ENCODE measurements at regions of chr5 and their contacts with region 1.

Region 1: DNA sequence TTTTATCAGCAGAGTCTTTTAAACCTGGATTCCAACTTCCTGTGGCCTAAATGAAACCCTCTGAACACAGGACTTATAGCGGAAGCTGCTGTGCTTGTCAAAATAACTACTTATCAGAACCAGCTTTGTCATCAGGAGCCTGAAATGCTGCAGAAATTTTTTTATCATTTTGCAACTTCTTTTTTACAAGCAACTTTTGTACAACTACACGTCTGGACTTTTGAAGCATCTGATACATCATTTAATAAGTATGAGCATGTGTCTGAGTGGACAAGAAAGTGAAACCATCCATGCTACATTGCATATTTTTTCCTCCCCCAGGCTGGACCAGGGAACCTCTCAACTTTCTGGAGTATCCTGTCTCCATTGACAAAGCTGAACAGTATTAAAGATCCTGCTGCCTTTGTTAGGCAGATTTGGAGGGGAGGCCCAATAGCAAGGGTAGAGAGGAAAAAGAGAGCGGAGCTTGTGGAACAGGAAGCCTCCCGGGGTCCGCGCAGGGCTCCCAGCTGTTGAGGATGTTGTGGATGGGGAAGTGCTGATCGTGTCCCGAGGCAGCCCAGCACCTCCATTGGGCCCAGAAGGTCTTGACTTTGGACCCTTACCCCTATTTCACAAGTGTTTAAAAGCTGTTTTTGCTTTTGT is 196.6 kb downstream of the MSX2 start:
- DNase-seq: no peak
- H3K4me3 ChIP-seq: no peak overlapping the region
- H3K27ac ChIP-seq: no peak overlapping the region
- H3K4me1 ChIP-seq: no peaks in the 10 kb centered on the region
- H3K27me3 ChIP-seq: no peaks in the 10 kb centered on the region
- CTCF ChIP-seq: no peak
- EP300 ChIP-seq: no peak
- RAD21 ChIP-seq: no peak

Region 2: GRCh38 chr5:174608631-174609097 is 312.4 kb before region 1 on chr5:
- CTCF ChIA-PET with region 1: no interaction called
- POLR2A ChIA-PET with region 1: no interaction called
- DNase-seq: peak; percentile 42
- H3K4me3 ChIP-seq: no peak overlapping the region
- H3K27ac ChIP-seq: no peak overlapping the region; a peak in 1 of 4 replicates
- H3K4me1 ChIP-seq: peaks cover 0 to 9% of the 10 kb centered on the region in 2 experiments; a peak in 1 of 4 replicates
- H3K27me3 ChIP-seq: no peaks in the 10 kb centered on the region
- CTCF ChIP-seq: no peak
- EP300 ChIP-seq: no peak
- RAD21 ChIP-seq: no peak

Region 3: DNA sequence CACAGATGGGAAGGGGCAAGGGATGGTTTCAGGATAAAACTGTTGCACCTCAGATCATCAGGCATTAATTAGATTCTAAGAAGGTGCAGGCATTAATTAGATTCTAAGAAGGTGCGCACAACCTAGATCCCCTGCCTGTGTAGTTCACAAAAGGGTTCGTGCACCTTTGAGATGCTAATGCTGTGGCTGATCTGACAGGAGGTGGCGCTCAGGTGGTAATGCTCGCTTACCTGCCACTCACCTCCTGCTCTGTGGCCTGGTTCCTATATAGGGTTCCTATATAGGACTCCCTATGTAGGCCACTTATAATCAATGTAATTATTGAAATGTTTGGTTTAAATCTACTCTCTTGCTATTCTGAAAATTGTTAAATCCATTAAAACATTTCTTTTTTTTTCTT is 25.7 kb before region 1 on chr5:
- CTCF ChIA-PET with region 1: no interaction called
- POLR2A ChIA-PET with region 1: no interaction called
- DNase-seq: no peak
- H3K4me3 ChIP-seq: no peak overlapping the region; a peak in 1 of 4 replicates
- H3K27ac ChIP-seq: no peak overlapping the region
- H3K4me1 ChIP-seq: no peaks in the 10 kb centered on the region; a peak in 1 of 4 replicates
- H3K27me3 ChIP-seq: no peaks in the 10 kb centered on the region
- CTCF ChIP-seq: no peak
- EP300 ChIP-seq: no peak
- RAD21 ChIP-seq: no peak

Region 4: DNA sequence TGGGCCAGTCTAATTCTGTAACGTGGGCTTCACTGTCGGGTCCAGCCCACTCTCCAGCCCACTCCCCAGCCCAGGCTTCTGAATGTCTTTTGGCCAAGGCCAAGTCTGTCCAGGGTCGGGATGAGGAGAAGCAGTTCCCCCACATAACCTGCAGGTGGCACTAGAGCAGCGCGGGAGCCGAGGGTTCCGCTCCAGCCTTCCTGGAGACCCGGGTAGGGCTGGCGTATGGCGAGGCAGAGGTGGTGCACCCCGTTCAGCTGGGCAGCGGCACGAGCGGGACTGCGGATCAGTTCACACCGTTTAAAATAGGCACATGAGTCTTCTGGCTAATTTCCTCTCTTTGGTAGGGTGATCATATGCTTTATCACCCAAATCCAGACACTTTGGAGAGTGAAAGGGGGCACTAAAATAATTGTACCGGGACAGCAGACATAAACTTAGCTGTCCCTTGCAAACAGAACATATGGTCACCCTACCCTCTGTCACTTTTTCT is 10.7 kb before region 1 on chr5:
- CTCF ChIA-PET with region 1: interaction called, 24 read pairs
- POLR2A ChIA-PET with region 1: no interaction called
- DNase-seq: peak; percentile 90
- H3K4me3 ChIP-seq: peak overlapping the region in 1 of 2 experiments; percentile 43; a peak in 1 of 4 replicates
- H3K27ac ChIP-seq: no peak overlapping the region
- H3K4me1 ChIP-seq: no peaks in the 10 kb centered on the region
- H3K27me3 ChIP-seq: no peaks in the 10 kb centered on the region
- CTCF ChIP-seq: peak; percentile 75
- EP300 ChIP-seq: no peak
- RAD21 ChIP-seq: peak; percentile 86